ENCODE measurements at regions of chr17 and their contacts with region 1.

Region 1: DNA sequence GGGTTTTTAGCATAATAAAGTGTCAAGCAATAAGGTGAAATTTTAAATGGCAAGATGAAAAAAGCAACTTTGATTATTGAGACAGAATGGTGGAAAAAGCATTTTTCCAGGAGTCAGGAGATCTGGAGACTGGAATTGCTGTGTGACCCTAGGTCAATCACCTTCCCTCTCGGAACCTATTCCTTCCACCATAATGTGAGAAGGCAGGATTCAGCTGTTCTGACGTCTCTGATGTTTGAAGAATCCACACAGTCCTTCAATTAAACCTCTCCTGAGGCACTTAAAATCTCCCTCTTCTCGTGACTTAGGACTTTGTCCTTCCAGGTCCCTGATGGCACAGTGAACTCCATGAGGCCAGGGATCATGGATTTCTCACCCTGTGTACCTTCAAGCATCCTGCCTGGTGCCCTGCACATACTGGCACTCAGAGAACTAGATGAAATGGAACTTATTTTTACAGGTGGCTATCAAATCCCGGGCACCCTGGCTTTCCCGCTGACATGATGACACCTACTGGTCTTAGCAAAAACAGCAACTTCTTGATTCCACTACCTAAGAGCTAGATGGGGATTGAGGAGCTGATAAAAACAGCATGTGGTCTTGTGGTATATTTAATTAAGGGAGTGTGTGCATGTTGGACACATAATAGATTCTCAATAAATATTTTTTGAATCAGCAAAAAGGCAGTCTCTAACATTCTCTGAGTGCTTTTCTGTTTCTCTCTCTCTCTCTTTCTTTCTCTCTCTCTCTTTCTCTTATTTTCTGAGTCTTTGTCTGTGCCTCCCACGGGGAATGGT is 2.3 kb upstream of the CCDC182 start:
- DNase-seq: peak in 1 of 2 donors; percentile 28
- ATAC-seq: peak; percentile 69

Region 2: DNA sequence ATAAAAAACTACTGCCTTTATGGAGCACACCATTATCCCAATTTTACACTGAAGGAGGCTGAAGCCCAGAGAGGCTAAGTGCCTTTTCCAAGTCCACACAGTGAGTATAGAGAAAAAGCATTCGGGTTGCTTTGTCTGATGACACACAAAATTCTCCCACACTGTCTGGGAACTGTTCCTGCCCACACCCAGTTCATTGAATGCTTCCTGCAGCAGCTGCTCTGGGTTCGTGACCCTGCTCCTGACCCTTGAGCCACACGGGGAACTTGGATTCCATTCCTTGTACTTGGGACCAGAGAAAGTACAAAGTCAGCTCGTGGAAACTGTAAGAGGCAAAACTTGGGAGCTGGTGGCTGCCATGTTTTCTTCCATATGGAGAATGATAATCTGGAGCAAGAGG is 604.5 kb before region 1 on chr17:
- intact Hi-C with region 1: loop called in 1 of 2 experiments (anchors 10 kb)
- DNase-seq: no peak
- ATAC-seq: peak; percentile 34

Region 3: DNA sequence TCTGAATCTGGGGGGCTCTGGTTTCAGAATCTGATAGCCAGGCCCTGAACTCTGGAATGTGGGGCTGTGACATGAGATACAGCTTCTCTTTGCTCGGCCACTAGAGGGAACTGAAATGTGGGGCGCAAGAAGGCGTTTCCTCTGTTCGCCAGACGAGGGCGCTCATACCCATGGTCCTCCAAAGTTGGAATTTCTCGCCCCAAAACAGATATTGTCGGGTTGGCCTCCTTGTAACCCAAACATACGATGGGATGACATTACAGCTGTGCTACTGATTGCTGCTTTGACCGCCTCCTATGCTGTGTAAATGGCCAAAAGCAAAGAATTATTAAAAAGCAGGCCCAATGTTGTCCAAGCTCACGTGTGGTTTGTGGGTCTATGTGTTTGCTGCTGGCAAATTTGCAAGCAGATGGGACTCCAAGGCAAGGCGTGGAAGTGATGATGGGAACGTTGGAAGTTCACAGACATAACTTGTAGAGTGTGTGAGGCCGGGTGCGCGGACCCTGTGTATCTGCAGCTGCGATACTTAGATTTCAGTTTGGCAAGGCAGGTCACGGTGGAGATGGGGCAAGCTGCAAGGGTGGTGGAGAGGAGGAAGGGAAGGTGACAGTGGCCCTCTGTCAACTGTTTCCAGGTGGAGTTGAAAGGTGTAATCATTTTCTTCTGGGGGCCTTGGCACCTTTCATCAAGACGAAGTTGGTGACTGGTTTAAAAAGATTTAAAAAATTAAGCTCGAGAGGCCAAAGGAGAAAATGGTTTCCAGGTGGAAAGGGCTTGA is 504.1 kb before region 1 on chr17:
- intact Hi-C with region 1: loop called in 1 of 2 experiments (anchors 5 kb)
- DNase-seq: peak; percentile 34 to 74
- ATAC-seq: peak; percentile 85

Region 4: DNA sequence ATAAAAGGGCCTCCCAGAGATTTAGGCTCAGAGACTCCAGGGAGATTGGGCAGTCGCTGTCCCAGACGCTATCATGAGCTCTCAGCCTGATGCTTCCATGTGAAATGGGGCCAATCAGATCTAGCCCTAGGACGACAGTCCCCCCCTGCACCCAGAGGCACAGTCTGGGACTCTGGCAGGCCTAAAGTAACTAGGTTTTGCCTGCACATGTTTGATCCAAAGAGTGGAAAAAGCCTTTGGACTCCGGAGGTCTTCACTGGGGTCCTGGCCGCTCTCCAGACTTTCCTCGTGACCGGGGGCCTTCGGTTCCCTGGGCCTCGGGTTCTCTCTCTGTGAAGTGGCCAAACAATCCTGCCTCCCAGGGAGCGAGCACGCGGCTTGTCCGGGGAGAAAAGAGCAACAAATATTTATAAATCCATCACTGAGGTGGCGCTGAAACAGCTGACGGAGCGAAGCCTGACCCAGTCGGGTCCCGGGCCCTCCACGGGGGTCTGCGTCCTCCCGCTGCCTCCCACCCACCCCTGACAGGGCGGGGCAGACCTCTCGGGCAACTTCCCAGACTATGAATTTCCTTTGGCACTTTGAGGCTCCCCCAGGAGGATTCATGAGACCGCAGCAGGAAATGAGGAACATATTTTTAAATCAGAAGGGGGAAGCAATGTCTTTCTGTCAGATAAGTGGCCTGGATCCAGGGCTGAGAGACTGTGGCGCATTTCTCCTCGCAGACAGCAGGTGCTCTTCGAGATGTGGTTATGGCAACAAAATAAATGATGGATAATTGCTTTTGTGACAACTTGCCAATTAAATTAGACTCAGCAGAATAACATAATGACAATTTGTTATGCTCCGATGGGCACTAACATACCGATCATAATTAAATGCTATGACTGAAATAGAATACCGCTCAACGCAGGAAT is 63.6 kb after region 1 on chr17:
- intact Hi-C with region 1: no loop called
- DNase-seq: peak in 1 of 2 donors; percentile 10
- ATAC-seq: no peak